Breast epithelium (tissue), 4 donors: ENCODE measurements at regions of chr1 and their contacts with region 1.

Region 1: GRCh38 chr1:192873012-192873411 is 64.2 kb downstream of the RGS2 start:
- DNase-seq: no peak
- H3K4me3 ChIP-seq: no peak overlapping the region
- H3K27ac ChIP-seq: no peak overlapping the region
- H3K4me1 ChIP-seq: no peaks in the 10 kb centered on the region
- H3K27me3 ChIP-seq: no peaks in the 10 kb centered on the region
- CTCF ChIP-seq: no peak
- POLR2A ChIP-seq: no peak

Region 2: DNA sequence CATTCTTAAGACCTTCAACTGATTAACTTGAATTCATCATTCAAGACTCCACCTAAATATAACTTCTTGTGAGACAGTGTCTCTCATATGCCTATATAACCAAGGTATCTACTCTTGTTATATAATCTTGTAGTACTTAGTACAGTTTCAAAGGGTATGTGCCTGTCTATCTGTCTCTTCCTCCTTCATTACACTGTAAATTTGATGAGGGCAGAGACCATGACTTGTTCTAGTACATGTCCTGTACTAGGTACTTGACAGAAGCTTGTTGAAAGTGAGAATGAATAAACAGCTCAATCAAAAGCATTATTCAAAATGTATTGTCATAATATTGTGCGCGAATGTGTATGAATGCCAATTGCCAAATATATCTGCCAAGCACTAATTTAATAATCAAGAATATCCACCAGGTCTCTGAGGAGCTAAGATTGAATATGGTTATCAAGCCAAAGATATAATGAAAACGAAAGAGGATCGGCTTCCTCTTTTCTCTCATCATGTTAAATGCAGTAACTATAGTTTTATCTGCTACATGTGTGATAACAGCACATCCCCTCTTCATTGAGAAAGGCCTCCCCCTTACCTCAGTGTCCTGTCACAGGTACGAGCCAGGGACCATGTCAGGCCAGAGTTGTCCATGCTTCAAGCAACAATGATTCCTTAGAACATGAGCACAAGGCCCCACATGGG is 68.9 kb after region 1 on chr1:
- intact Hi-C with region 1: no loop called
- DNase-seq: no peak
- H3K4me3 ChIP-seq: no peak overlapping the region
- H3K27ac ChIP-seq: no peak overlapping the region
- H3K4me1 ChIP-seq: no peaks in the 10 kb centered on the region
- H3K27me3 ChIP-seq: no peaks in the 10 kb centered on the region
- CTCF ChIP-seq: no peak
- POLR2A ChIP-seq: no peak

Region 3: DNA sequence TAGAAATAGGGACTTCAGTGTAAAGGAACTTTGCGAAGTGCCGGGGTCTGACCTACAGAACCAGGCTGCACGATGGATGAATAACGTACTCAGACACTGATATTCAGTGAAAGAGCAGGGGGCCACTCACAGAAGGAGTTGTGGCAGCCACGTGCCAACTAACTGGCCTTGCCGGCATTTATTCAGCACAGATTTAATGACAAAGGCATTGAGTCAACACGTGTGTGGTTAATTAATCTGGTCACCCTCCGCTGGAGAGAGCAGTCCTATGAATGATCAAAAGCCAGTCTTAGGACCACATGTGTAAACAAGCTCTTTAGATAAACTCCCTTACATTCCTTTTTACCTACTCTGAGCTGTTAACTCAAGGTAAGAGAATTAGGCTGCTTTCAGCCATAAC is 319.6 kb after region 1 on chr1:
- intact Hi-C with region 1: no loop called
- DNase-seq: no peak
- H3K4me3 ChIP-seq: no peak overlapping the region
- H3K27ac ChIP-seq: no peak overlapping the region
- H3K4me1 ChIP-seq: no peaks in the 10 kb centered on the region
- H3K27me3 ChIP-seq: no peaks in the 10 kb centered on the region
- CTCF ChIP-seq: no peak
- POLR2A ChIP-seq: no peak

Region 4: DNA sequence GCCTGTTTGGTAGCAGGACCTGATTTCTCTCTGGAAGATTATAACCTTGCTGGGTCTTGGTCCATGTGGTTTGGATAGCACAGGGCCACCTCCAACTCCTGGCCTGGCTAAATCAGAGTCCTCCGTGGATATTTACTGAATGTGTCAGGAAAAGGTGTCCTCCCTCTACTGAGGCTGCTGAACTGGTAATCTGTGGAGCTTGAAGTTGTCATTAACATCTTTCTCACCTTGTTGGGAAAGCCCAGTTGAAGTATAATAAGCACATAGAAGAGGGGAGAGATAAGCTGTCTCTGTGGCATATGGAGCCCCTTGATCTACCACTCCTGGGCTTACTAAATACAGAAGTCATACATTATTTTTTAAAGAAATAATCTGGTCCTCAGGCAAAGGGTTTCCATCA is 607.7 kb after region 1 on chr1:
- intact Hi-C with region 1: loop called (anchors 5 kb)
- DNase-seq: no peak
- H3K4me3 ChIP-seq: no peak overlapping the region
- H3K27ac ChIP-seq: no peak overlapping the region
- H3K4me1 ChIP-seq: no peaks in the 10 kb centered on the region
- H3K27me3 ChIP-seq: no peaks in the 10 kb centered on the region
- CTCF ChIP-seq: no peak
- POLR2A ChIP-seq: no peak